ENCODE measurements at regions of chr9 and their contacts with region 1.

Region 1: DNA sequence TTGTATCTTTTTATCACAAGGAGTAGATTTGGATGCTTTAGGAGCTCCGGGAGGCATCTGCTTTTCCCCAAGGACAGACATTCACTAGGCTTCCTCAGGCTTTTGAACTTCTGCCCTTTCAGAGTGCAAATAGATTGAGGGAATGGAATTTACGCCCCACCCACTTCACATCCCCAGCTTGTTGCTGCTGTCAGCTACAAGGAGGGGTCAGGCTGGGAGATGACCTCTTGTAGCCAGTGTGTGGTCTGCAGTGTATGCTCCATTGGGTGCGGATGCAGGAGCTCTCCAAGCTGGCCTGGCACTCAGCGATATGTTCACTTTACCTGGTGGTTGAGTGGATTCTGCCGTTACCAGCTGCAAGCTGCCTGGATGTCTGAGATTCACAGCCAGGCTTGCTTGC is 6.4 kb downstream of the TNFSF15 start:
- DNase-seq: no peak
- ATAC-seq: no peak
- H3K4me3 ChIP-seq: no peak overlapping the region
- H3K27ac ChIP-seq: no peak overlapping the region
- H3K4me1 ChIP-seq: no peaks in the 10 kb centered on the region
- H3K27me3 ChIP-seq: no peaks in the 10 kb centered on the region
- CTCF ChIP-seq: no peak

Region 2: GRCh38 chr9:114811966-114812636 is 12.7 kb after region 1 on chr9:
- intact Hi-C with region 1: loop called in 1 of 2 experiments (anchors 1 kb)
- DNase-seq: no peak
- ATAC-seq: no peak
- H3K4me3 ChIP-seq: no peak overlapping the region
- H3K27ac ChIP-seq: no peak overlapping the region
- H3K4me1 ChIP-seq: peaks cover 3% of the 10 kb centered on the region
- H3K27me3 ChIP-seq: no peaks in the 10 kb centered on the region
- CTCF ChIP-seq: no peak

Measured in psoas muscle (tissue), 8 donors.